CD14-positive monocyte (primary cell): ENCODE measurements at regions of chr18 and their contacts with region 1.

Region 1: DNA sequence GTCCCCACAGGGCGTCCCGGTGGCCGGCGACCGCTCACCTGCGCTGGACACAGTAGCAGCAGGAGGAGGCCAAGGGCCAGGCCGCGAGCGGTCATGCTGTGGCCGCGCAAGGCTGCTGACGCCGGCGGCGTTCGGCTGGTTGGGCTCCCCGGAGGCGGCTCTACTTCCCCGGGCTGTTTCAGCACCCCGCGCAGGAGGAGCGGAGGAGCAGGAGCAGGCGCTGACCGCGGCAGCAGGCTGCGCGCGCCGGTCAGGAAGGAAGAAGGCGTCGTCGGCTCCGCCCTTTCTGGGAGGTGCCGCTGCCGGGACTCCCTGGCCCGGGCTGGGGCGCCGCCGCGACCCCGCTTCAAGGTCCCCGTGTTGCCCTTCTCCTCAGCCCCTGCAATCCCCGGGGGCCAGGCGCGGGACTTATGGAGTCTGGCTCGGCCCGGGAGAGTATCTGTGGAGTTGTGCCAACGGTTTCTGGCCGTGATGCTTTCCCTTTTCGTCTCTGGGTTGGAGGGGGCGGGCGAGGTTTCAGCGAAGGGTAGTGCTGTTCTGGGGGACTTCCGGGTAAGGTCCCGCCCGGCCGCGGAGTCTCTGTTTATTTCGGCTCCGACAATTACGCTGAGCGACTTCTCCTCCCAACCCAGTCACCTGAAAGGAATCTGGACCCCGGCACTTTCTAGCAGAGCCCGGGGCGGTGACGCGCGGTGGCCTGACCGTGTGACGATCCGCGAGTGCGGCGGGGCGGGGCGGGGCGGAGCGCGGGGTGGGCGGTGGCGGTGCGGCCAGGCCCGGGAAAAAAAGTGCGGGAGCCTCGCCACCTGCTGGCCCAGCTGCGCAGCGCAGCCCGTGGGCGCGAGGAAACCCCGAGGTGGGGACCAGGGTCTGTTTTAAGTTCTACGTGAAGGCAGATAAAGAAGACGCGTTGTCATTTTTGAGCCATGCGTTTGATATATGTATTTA is at the start of gene NPC1:
- DNase-seq: peak; percentile 92 to 95 (median 93)
- H3K4me3 ChIP-seq: peak within 1 kb of the TSS; percentile 76 to 94 (median 83)
- H3K4me3 Mint-ChIP-seq: peak within 1 kb of the TSS; percentile 93 to 96
- H3K27ac ChIP-seq: peak within 1 kb of the TSS; percentile 95 to 100
- H3K27ac Mint-ChIP-seq: peak within 1 kb of the TSS; percentile 96 to 100 (median 99)
- H3K4me1 ChIP-seq: peaks cover 28 to 32% of the 10 kb centered on the region in 2 donors
- H3K4me1 Mint-ChIP-seq: peaks cover 37% of the 10 kb centered on the region
- H3K27me3 ChIP-seq: no peaks in the 10 kb centered on the region
- H3K27me3 Mint-ChIP-seq: peaks cover 2 to 8% (median 2%) of the 10 kb centered on the region in 3 donors
- CTCF ChIP-seq: peak; percentile 97
- polyA plus RNA-seq, gene NPC1: 7.5 to 17.9 (median 17.7) TPM

Region 2: GRCh38 chr18:23231340-23232021 is 355.0 kb before region 1 on chr18:
- intact Hi-C with region 1: loop called in 1 of 2 experiments (anchors 10 kb)
- DNase-seq: peak; percentile 97 to 100 (median 99)
- H3K4me3 ChIP-seq: peak overlapping the region in 1 of 3 experiments; percentile 17
- H3K4me3 Mint-ChIP-seq: peak overlapping the region; percentile 61 to 81
- H3K27ac ChIP-seq: peak overlapping the region; percentile 72 to 77
- H3K27ac Mint-ChIP-seq: peak overlapping the region; percentile 94 to 98 (median 97)
- H3K4me1 ChIP-seq: peaks cover 22 to 32% of the 10 kb centered on the region in 2 donors
- H3K4me1 Mint-ChIP-seq: peaks cover 52% of the 10 kb centered on the region
- H3K27me3 ChIP-seq: no peaks in the 10 kb centered on the region
- H3K27me3 Mint-ChIP-seq: peaks cover 0 to 7% (median 6%) of the 10 kb centered on the region in 3 donors
- CTCF ChIP-seq: no peak

Region 3: DNA sequence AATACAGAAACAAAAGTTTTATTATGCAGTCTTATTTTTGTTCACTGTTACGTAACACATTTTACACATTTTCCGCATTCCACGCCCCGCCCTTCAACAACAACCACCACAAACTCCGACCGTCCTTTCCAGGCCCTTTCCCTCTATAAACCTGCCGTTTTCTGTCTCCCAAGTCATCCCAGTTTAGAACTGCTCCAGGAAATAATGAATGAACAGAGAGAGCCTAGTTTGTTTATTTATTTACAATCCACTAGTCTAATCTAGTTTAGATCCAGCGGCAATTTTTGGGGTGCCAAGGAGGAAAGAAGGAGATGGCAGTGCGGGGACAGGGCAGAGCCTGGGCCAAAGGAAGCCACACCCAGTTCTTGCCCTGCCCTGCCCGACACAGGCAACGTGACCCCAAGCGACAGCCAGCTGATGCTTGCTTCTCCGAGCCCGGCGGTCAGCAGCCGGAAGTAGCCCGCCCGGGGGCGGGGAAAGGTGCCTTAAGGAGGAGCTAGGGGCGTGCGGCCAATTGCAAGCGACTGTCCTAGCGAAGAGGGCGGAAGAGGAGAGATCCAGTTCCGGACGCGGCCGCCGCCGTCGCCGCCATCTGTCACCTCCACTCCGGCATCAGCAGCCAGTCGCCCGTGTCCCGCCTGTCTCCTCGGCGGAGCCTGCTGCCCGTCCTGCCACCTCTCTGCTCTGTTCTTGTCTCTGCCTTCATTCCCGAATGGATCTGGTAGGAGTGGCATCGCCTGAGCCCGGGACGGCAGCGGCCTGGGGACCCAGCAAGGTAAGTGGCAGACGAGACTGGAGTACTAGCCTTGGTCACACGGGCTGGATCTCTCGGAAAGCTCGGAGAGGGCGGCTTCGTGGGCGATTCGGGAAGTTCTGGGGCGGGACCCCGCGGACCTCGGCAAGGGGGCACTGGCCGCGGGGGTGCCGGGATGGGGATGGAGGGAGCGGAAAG is 133.5 kb before region 1 on chr18 and contains the start of gene RIOK3:
- intact Hi-C with region 1: loop called in 1 of 2 experiments (anchors 10 kb)
- DNase-seq: peak; percentile 98 to 99 (median 98)
- H3K4me3 ChIP-seq: peak within 1 kb of the TSS; percentile 80 to 99 (median 92)
- H3K4me3 Mint-ChIP-seq: peak within 1 kb of the TSS; percentile 99
- H3K27ac ChIP-seq: peak within 1 kb of the TSS; percentile 80 to 98
- H3K27ac Mint-ChIP-seq: peak within 1 kb of the TSS; percentile 93 to 99 (median 99)
- H3K4me1 ChIP-seq: peaks cover 29 to 60% of the 10 kb centered on the region in 2 donors
- H3K4me1 Mint-ChIP-seq: peaks cover 53% of the 10 kb centered on the region
- H3K27me3 ChIP-seq: no peaks in the 10 kb centered on the region
- H3K27me3 Mint-ChIP-seq: no peaks in the 10 kb centered on the region
- CTCF ChIP-seq: no peak
- polyA plus RNA-seq, gene RIOK3: 50.9 to 79.7 (median 62.2) TPM

Region 4: DNA sequence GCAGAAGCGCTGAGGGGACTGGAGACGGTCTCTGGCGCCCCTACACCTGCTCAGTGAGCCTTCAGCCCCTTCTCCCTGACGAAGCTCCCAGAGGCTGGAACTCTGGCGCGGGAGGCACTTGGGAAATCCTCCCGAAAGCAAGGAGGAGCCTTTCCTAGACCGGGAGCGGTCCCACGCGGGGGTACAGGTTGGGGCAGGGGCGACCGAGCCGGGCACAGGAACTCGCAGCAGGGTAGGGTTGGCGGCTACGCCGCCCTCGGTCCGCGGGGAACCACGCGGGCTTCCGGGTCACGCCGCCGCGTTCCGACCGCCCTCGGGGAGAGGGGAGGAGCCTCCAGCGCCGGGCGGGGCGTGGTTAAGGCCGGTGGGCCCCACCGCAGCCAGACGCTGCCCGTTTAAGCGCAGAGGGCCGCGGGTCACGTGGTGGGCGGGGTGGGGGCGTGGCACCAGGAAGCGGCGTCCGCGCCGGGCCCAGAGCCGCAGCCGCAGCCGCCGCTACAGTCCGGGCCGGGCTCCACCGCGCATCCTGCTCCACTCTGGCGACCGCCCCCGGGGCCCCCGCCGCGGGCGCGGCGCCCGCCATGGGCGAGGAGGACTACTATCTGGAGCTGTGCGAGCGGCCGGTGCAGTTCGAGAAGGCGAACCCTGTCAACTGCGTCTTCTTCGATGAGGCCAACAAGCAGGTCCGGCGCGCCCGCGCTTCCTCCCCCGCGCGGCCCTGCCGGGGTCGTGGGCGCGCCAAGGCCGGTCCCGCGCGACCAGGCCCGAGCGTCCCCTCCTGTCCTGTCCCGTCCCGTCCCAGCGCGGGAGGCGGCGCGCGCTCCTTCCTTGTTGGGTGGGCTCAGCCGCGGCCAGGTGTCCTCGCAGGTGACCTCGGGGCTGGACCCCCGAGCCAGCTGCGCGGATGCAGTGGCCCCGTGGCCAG is 83.2 kb before region 1 on chr18 and contains the start of gene RMC1:
- intact Hi-C with region 1: loop called in 1 of 2 experiments (anchors 2 kb)
- DNase-seq: peak; percentile 94 to 97 (median 96)
- H3K4me3 ChIP-seq: peak within 1 kb of the TSS; percentile 71 to 95 (median 77)
- H3K4me3 Mint-ChIP-seq: peak within 1 kb of the TSS; percentile 92 to 97
- H3K27ac ChIP-seq: peak within 1 kb of the TSS; percentile 78 to 94
- H3K27ac Mint-ChIP-seq: peak within 1 kb of the TSS; percentile 91 to 97 (median 94)
- H3K4me1 ChIP-seq: peaks cover 45 to 56% of the 10 kb centered on the region in 2 donors
- H3K4me1 Mint-ChIP-seq: peaks cover 50% of the 10 kb centered on the region
- H3K27me3 ChIP-seq: no peaks in the 10 kb centered on the region
- H3K27me3 Mint-ChIP-seq: peaks cover 0 to 2% (median 1%) of the 10 kb centered on the region in 3 donors
- CTCF ChIP-seq: no peak
- polyA plus RNA-seq, gene RMC1: 21.9 to 70.8 (median 30.1) TPM

Region 5: DNA sequence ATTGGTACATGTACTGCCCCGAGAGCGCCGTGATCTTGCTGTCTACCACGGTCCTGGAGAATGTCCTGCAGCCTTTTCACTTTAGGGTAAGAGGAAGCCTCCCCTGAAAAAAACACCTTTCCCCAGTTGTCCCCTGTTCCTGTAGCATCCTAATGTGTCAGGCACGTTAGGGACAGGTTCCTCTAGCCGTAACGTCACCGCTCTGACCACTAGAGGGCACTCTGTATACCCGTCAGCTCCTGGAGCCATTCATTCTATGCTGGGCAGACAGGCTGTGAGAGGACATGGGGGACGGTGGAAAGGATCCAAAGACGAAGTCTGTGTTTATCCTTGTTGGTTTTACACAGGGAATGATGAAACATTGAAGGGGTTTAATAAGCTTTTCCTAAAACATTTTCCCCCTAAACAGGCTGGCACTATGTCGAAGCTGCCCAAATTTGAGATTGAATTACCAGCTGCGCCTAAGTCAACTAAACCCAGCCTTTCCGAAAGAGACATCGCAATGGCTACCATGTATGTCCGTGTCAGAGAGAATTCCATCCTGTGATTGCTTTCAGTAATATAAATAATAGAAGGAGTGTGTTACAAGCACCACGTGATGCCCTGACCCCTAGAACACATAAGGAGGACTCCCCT is 70.5 kb before region 1 on chr18:
- intact Hi-C with region 1: loop called (anchors 5 kb)
- DNase-seq: peak; percentile 61 to 78 (median 76)
- H3K4me3 ChIP-seq: no peak overlapping the region
- H3K4me3 Mint-ChIP-seq: no peak overlapping the region
- H3K27ac ChIP-seq: no peak overlapping the region
- H3K27ac Mint-ChIP-seq: peak overlapping the region in 6 of 7 donors; percentile 1 to 85 (median 68)
- H3K4me1 ChIP-seq: peaks cover 17 to 19% of the 10 kb centered on the region in 2 donors
- H3K4me1 Mint-ChIP-seq: peaks cover 20% of the 10 kb centered on the region
- H3K27me3 ChIP-seq: no peaks in the 10 kb centered on the region
- H3K27me3 Mint-ChIP-seq: peaks cover 0 to 2% (median 0%) of the 10 kb centered on the region in 3 donors
- CTCF ChIP-seq: peak; percentile 85